ENCODE measurements at regions of chr9 and their contacts with region 1.

Region 1: DNA sequence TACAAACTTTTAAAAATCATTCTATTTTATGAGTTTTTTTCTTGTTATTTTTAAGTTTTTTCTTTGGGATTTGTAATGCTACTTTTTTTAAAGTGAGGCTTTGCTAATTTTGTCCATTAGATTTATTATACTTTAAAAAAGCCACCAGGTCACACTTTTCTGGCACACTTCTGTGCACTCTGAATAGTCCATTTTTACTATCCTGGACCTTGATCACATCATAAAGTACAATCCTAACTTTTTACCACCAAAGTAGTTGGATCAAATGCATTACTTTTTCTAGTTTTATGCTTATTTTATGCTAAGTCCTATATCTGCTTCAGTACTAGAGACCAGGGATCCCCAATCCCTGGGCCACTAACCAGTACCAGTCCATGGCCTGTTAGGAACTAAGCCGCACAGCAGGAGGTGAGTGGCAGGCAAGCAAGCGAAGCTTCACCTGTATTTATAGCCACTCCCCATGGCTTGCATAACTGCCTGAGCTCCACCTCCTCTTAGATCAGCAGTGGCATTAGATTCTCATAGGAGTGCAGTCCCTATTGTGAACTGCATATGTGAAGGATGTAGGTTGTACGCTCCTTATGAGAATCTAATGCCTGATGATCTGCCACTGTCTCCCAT is 16.0 kb downstream of the FRRS1L start:
- DNase-seq: no peak
- ATAC-seq: no peak
- H3K4me3 ChIP-seq: no peak overlapping the region
- H3K4me3 Mint-ChIP-seq: no peak overlapping the region
- H3K27ac ChIP-seq: no peak overlapping the region
- H3K27ac Mint-ChIP-seq: no peak overlapping the region
- H3K4me1 ChIP-seq: no peaks in the 10 kb centered on the region
- H3K4me1 Mint-ChIP-seq: no peaks in the 10 kb centered on the region
- H3K27me3 ChIP-seq: no peaks in the 10 kb centered on the region
- H3K27me3 Mint-ChIP-seq: peaks cover 7% of the 10 kb centered on the region
- CTCF ChIP-seq: no peak

Region 2: GRCh38 chr9:108704156-108704852 is 446.7 kb before region 1 on chr9:
- CTCF ChIA-PET with region 1: no interaction called
- POLR2A ChIA-PET with region 1: no interaction called
- intact Hi-C with region 1: no loop called
- DNase-seq: no peak
- ATAC-seq: no peak
- H3K4me3 ChIP-seq: no peak overlapping the region
- H3K4me3 Mint-ChIP-seq: no peak overlapping the region
- H3K27ac ChIP-seq: no peak overlapping the region
- H3K27ac Mint-ChIP-seq: no peak overlapping the region
- H3K4me1 ChIP-seq: no peaks in the 10 kb centered on the region
- H3K4me1 Mint-ChIP-seq: no peaks in the 10 kb centered on the region
- H3K27me3 ChIP-seq: no peaks in the 10 kb centered on the region
- H3K27me3 Mint-ChIP-seq: no peaks in the 10 kb centered on the region
- CTCF ChIP-seq: no peak

Region 3: GRCh38 chr9:109138421-109138820 is 12.6 kb before region 1 on chr9:
- CTCF ChIA-PET with region 1: no interaction called
- POLR2A ChIA-PET with region 1: no interaction called
- intact Hi-C with region 1: loop called in 1 of 2 experiments (anchors 1 kb)
- DNase-seq: no peak
- ATAC-seq: no peak
- H3K4me3 ChIP-seq: no peak overlapping the region
- H3K4me3 Mint-ChIP-seq: no peak overlapping the region
- H3K27ac ChIP-seq: no peak overlapping the region
- H3K27ac Mint-ChIP-seq: no peak overlapping the region
- H3K4me1 ChIP-seq: no peaks in the 10 kb centered on the region
- H3K4me1 Mint-ChIP-seq: no peaks in the 10 kb centered on the region
- H3K27me3 ChIP-seq: no peaks in the 10 kb centered on the region
- H3K27me3 Mint-ChIP-seq: no peaks in the 10 kb centered on the region
- CTCF ChIP-seq: no peak

Measured in CD8-positive, alpha-beta T cell (primary cell).